ENCODE measurements at regions of chr11 and their contacts with region 1.

Region 1: DNA sequence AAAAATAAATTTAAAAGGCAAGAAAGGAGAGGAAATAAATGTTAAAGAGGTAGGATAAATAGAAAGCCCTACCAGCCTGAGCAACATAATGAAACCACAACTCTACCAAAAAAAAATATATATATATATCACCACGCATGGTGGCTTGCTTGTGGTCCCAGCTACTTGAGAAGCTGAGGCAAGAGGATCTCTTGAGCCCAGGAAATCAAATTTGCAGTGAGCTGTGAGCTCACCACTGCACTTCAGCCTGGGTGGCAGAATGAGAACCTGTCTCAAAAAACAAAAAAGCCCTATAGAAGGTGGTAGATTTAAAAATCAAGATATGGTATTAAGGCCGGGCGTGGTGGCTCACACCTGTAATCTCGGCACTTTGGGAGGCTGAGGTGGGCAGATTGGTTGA is 10.5 kb downstream of the NUCB2 start:
- DNase-seq: no peak
- H3K4me3 ChIP-seq: no peak overlapping the region
- H3K27ac ChIP-seq: no peak overlapping the region
- H3K4me1 ChIP-seq: peaks cover 0 to 41% (median 3%) of the 10 kb centered on the region in 4 experiments
- H3K27me3 ChIP-seq: no peaks in the 10 kb centered on the region

Region 2: DNA sequence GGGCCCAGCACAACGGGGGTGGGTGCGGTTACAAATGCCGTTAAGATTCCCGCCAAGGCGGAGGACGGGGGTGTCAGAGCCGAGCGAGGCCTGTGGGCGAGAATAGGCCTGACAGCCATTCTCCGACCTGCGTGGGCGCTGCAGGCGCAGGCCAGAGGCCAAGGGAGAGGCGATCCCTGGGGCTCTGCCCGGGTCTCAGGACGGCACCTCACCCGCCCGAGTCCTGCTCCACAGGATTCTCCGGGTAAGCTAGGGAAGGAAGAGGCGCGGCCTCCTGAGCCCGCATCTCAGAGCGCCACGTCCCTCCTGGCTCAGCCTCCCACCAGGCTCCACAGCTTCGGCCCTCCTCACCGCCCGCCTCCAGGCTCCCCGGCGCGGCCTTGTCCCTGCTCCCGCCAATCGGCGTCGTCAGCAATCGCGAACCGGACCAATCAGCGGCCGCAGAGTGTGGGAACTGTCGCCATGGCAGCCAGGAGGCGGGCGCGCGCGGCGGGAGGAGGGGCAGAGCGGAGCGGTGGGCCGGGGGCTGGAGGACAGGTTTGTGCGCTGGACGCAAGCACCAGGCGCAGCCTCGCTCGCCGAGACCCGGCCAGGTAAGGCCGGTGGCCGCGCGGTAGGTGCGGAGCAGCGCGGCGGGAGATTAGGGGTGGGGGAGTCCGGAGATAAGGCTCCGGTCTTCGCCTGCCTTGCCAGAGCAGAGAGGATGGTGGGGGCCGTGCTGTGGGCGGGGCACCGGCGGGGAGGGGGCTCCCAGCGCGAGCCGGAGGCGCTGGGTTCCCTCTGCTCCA is 10.6 kb before region 1 on chr11 and contains the start of gene NUCB2:
- CTCF ChIA-PET with region 1: interaction called, 14 read pairs
- POLR2A ChIA-PET with region 1: interaction called, 5 read pairs
- DNase-seq: peak; percentile 96 to 98 (median 98)
- H3K4me3 ChIP-seq: peak within 1 kb of the TSS; percentile 77 to 99 (median 93)
- H3K27ac ChIP-seq: peak within 1 kb of the TSS; percentile 86 to 93
- H3K4me1 ChIP-seq: peaks cover 26 to 76% (median 57%) of the 10 kb centered on the region in 4 experiments
- H3K27me3 ChIP-seq: no peaks in the 10 kb centered on the region

Region 3: DNA sequence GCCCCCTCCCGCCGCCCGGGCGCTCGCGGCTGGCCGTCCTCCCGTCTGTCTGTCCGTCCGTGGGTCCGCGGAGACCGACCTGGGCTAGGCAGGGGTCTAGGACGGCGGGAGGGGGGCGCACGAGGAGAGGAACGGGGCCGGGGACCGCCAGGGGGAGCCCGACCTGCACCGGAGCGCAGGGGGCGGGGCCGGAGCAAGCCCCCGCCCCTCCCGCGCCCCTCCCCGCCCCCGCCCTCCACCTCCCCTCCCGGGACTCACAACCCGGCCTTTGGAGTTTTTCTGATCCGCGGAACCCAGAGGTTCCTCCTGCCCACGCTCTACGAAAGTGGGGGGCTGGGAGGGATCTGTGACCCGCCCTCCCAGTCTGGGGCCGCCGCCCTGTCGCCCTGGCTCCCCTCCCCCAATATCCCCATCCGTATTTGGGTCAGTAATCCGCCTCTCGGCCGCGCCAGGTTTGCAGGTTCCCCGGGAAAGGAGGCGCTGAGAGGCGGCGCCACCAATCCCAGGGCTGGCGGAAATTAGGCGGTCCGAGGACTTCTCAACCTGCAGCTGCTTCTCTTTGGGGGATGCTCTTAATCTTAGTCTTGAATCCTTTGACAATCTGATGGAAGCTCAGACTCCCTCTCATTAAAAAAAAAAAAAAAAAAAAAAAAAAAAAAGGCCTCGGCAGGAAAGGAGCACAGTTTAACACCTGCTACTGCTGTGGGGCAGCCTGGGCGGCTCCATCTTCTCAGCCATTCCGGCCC is 102.3 kb after region 1 on chr11:
- CTCF ChIA-PET with region 1: no interaction called
- POLR2A ChIA-PET with region 1: no interaction called
- DNase-seq: peak; percentile 69 to 82 (median 80)
- H3K4me3 ChIP-seq: peak overlapping the region in 6 of 7 experiments; percentile 22 to 76 (median 60)
- H3K27ac ChIP-seq: no peak overlapping the region
- H3K4me1 ChIP-seq: peaks cover 0 to 12% (median 7%) of the 10 kb centered on the region in 4 experiments
- H3K27me3 ChIP-seq: peaks cover 0 to 7% (median 0%) of the 10 kb centered on the region in 5 experiments